ENCODE measurements at regions of chr9 and their contacts with region 1.

Region 1: GRCh38 chr9:121424024-121424432 is 54.0 kb upstream of the STOM start:
- DNase-seq: no peak
- H3K27ac ChIP-seq: no peak overlapping the region
- CTCF ChIP-seq: no peak

Region 2: GRCh38 chr9:121350993-121351561 is 73.0 kb before region 1 on chr9:
- CTCF ChIA-PET with region 1: no interaction called
- POLR2A ChIA-PET with region 1: no interaction called
- DNase-seq: peak; percentile 52
- H3K27ac ChIP-seq: no peak overlapping the region
- CTCF ChIP-seq: no peak

Region 3: GRCh38 chr9:121399883-121400607 is 24.0 kb before region 1 on chr9:
- CTCF ChIA-PET with region 1: no interaction called
- POLR2A ChIA-PET with region 1: no interaction called
- DNase-seq: peak; percentile 78
- H3K27ac ChIP-seq: no peak overlapping the region
- CTCF ChIP-seq: peak; percentile 78

Region 4: DNA sequence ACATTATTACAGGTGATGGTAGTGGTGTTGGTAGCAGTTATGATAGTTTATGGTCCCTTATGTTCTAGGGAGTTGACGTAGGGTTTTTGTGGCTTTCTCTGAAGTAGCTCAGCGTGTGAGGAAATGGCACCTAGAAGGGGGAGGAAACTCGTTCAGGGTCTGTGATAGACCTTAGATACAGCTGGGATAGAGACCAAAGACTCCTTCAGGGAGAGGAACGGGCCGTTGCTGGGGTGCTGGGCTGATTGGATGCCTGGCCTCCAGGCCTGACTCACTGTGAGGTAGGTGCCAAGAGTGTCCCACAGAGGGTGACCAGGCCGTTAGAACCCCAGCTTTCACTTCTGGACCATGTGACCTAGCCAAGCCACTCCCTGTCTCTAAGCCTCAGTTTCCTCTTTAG is 324.0 kb after region 1 on chr9:
- CTCF ChIA-PET with region 1: no interaction called
- POLR2A ChIA-PET with region 1: interaction called, 11 read pairs
- DNase-seq: no peak
- H3K27ac ChIP-seq: peak overlapping the region; percentile 84
- CTCF ChIP-seq: no peak

Measured in RWPE1 (cell line).